ENCODE measurements at regions of chr15 and their contacts with region 1.

Region 1: DNA sequence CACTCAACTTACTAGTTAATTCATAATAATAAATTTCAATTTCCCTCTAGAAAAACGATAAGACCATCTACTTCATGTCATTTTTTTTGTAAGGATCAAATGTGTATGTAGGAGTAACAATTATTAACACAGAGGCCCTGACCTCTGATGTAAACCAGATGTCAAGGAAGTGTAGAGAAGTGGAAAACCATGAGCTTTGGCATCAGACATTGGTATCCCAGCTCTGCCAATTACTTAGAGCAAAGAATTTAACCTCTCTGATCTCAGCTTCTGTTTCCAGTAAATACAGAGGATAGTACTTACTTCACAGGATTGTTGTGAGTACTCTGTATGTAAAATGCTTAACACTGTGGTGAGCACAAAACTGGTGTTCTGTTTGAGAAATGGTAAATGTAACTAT is 17.5 kb downstream of the AQR start:
- DNase-seq: no peak
- H3K4me3 ChIP-seq: no peak overlapping the region
- H3K4me3 Mint-ChIP-seq: no peak overlapping the region
- H3K27ac Mint-ChIP-seq: no peak overlapping the region
- H3K4me1 ChIP-seq: peaks cover 12% of the 10 kb centered on the region
- H3K4me1 Mint-ChIP-seq: no peaks in the 10 kb centered on the region
- H3K27me3 ChIP-seq: no peaks in the 10 kb centered on the region
- H3K27me3 Mint-ChIP-seq: no peaks in the 10 kb centered on the region
- CTCF ChIP-seq: no peak

Region 2: GRCh38 chr15:34783991-34784390 is 168.0 kb before region 1 on chr15:
- CTCF ChIA-PET with region 1: no interaction called
- POLR2A ChIA-PET with region 1: interaction called, 11 read pairs
- intact Hi-C with region 1: no loop called
- DNase-seq: no peak
- H3K4me3 ChIP-seq: no peak overlapping the region
- H3K4me3 Mint-ChIP-seq: no peak overlapping the region
- H3K27ac Mint-ChIP-seq: no peak overlapping the region
- H3K4me1 ChIP-seq: no peaks in the 10 kb centered on the region
- H3K4me1 Mint-ChIP-seq: no peaks in the 10 kb centered on the region
- H3K27me3 ChIP-seq: no peaks in the 10 kb centered on the region; the same call in none of the 2 replicates
- H3K27me3 Mint-ChIP-seq: peaks cover 8% of the 10 kb centered on the region
- CTCF ChIP-seq: no peak

Region 3: GRCh38 chr15:35013370-35013769 is 61.4 kb after region 1 on chr15:
- CTCF ChIA-PET with region 1: no interaction called
- POLR2A ChIA-PET with region 1: no interaction called
- intact Hi-C with region 1: no loop called
- DNase-seq: no peak
- H3K4me3 ChIP-seq: no peak overlapping the region
- H3K4me3 Mint-ChIP-seq: no peak overlapping the region
- H3K27ac Mint-ChIP-seq: no peak overlapping the region
- H3K4me1 ChIP-seq: no peaks in the 10 kb centered on the region
- H3K4me1 Mint-ChIP-seq: no peaks in the 10 kb centered on the region
- H3K27me3 ChIP-seq: no peaks in the 10 kb centered on the region
- H3K27me3 Mint-ChIP-seq: peaks cover 11% of the 10 kb centered on the region
- CTCF ChIP-seq: no peak